ENCODE measurements at regions of chr13 and their contacts with region 1.

Region 1: GRCh38 chr13:52428295-52428694 is 22.1 kb downstream of the VPS36 start:
- DNase-seq: no peak
- ATAC-seq: no peak

Region 2: DNA sequence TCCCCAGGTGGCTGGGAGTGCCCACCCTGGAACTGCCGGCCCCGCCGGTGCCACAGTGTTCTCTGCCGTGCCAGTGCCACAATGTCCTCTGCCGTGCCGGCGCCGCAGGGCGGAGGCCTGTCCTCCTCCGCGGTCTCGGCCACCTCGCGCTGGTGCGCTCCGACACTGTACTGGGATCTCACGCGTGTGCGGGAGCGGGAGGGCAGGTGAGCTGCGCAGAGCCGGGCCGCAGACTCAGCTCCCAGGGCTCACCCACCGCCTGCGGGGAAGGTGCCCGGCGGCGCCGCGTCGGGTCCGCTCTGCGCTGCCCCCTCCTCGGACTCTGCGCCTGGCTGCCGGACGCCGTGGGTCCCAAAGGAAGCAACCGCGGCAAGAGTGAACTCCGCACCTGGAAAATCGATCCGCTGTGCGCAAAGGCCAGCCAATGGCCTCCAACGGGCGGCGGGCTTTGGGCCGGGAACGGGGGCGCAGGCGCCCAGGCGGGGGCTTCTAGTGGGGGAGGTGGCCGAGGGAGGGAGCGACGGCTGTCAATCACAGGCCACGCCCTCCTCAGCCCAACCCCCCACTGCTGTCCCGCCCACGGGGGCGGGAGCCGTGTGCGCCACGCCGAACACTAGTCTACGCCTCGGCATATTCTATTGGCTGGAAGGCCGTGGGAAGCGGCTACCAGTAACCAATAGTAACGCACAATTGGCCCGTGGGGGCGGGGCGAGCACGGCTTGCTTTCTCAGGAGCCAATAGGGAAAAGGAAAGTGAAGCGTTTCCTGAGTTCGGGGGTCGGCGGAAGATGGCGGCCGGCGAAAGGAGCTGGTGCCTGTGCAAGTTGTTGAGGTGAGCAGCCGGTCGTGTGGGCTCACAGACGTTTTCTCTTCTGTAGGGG is 416.4 kb before region 1 on chr13 and contains the start of gene ALG11:
- intact Hi-C with region 1: loop called (anchors 5 kb)
- DNase-seq: peak; percentile 99
- ATAC-seq: peak; percentile 100
- total RNA-seq, gene ALG11: 20.9 TPM

Region 3: GRCh38 chr13:53137779-53138178 is 709.5 kb after region 1 on chr13:
- intact Hi-C with region 1: no loop called
- DNase-seq: no peak
- ATAC-seq: peak; percentile 74

Measured in Right ventricle myocardium inferior (tissue), 1 donor.